SK-N-SH (cell line): ENCODE measurements at regions of chr3 and their contacts with region 1.

Region 1: GRCh38 chr3:9843715-9844438 is at the start of gene RPUSD3:
- DNase-seq: peak; percentile 100
- H3K4me3 ChIP-seq: peak within 1 kb of the TSS; percentile 74 to 88
- H3K27ac ChIP-seq: peak within 1 kb of the TSS; percentile 58 to 74
- H3K4me1 ChIP-seq: peaks cover 5% of the 10 kb centered on the region in 2 experiments; a peak in 2 of 4 replicates
- H3K27me3 ChIP-seq: no peaks in the 10 kb centered on the region
- CTCF ChIP-seq: no peak
- EP300 ChIP-seq: no peak
- RAD21 ChIP-seq: no peak
- polyA plus RNA-seq, gene RPUSD3: 43.4 and 48.0 TPM in 2 replicates

Region 2: DNA sequence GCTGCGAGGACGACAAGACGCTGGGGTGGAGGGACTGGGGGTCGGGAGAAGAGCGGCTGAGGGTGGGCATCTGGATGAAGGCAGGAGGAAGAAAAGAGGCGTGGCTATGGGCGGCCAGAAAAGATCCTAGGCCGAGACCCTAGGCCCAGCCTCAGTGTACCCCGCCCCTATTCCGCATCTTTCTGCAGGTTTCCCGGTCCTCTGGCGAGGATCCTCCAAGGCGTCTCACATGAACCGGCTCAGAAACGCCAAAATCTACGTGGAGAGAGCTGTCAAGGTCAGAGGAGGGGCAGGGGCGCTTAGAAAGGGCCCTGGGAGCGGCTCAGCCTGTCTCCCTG is 33.5 kb before region 1 on chr3:
- CTCF ChIA-PET with region 1: no interaction called
- POLR2A ChIA-PET with region 1: no interaction called
- DNase-seq: no peak
- H3K4me3 ChIP-seq: peak overlapping the region; percentile 55 to 61
- H3K27ac ChIP-seq: peak overlapping the region; percentile 76 to 85; a peak in 3 of 4 replicates
- H3K4me1 ChIP-seq: peaks cover 3 to 20% of the 10 kb centered on the region in 2 experiments; a peak in 1 of 4 replicates
- H3K27me3 ChIP-seq: no peaks in the 10 kb centered on the region
- CTCF ChIP-seq: no peak
- EP300 ChIP-seq: no peak
- RAD21 ChIP-seq: no peak

Region 3: GRCh38 chr3:9946112-9947024 is 102.5 kb after region 1 on chr3:
- CTCF ChIA-PET with region 1: interaction called, 11 read pairs
- POLR2A ChIA-PET with region 1: interaction called, 3 read pairs
- DNase-seq: peak; percentile 89
- H3K4me3 ChIP-seq: peak overlapping the region; percentile 41; a peak in 3 of 4 replicates
- H3K27ac ChIP-seq: peak overlapping the region in 1 of 2 experiments; percentile 43; a peak in 1 of 4 replicates
- H3K4me1 ChIP-seq: peaks cover 0 to 7% of the 10 kb centered on the region in 2 experiments; a peak in 1 of 4 replicates
- H3K27me3 ChIP-seq: no peaks in the 10 kb centered on the region
- CTCF ChIP-seq: peak; percentile 52
- EP300 ChIP-seq: no peak
- RAD21 ChIP-seq: peak; percentile 48